Sigmoid colon (tissue), 7 donors: ENCODE measurements at regions of chr19 and their contacts with region 1.

Region 1: GRCh38 chr19:36772311-36773222 is at the start of gene ZNF850:
- DNase-seq: peak; percentile 97
- H3K4me3 ChIP-seq: peak within 1 kb of the TSS; percentile 53 to 76 (median 71)
- H3K27ac ChIP-seq: peak within 1 kb of the TSS; percentile 80 to 88 (median 84)
- H3K4me1 ChIP-seq: peaks cover 0 to 20% (median 10%) of the 10 kb centered on the region in 4 donors
- H3K27me3 ChIP-seq: peaks cover 0 to 9% (median 0%) of the 10 kb centered on the region in 3 donors
- CTCF ChIP-seq: no peak
- EP300 ChIP-seq: no peak
- POLR2A ChIP-seq: no peak
- total RNA-seq, gene ZNF850: 2.2 to 4.6 (median 3.3) TPM

Region 2: DNA sequence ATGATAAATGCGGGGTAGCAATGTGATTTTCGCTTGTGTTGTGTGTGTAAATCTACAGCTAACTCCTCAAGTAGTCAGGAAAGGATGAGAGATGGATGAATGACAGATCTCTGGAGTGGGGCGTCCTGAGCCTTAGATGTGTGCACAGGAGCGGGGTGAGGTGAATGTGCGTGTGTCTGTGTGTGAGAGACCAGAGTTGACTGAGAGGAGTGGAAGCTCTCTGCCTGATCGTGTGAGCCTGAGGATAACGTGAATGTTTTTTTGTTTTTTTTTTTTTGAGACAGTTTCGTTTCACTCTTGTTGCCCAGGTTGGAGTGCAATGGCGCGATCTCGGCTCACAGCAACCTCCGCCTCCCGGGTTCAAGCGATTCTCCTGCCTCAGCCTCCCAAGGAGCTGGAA is 106.7 kb before region 1 on chr19:
- intact Hi-C with region 1: loop called (anchors 2 kb)
- DNase-seq: no peak
- H3K4me3 ChIP-seq: peak overlapping the region; percentile 66 to 86 (median 76)
- H3K27ac ChIP-seq: no peak overlapping the region
- H3K4me1 ChIP-seq: peaks cover 0 to 21% (median 17%) of the 10 kb centered on the region in 4 donors
- H3K27me3 ChIP-seq: no peaks in the 10 kb centered on the region
- CTCF ChIP-seq: no peak
- EP300 ChIP-seq: no peak
- POLR2A ChIP-seq: no peak

Region 3: DNA sequence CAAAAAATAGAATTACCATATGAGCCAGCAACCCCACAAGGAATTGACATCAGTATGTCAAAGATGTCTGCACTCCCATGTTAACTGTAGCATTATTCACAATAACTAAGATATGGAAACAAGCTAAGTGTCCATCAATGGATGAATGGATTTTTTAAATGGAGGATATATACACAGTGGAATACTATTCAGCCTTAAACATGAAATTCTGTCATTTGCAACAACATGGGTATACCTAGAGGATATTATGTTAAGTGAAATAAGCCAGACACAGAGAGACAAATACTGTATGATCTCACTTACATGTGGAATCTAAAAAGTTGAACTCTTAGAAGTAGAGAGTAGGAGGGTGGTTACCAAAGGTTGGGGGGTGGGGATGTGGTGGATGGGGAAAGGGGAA is 93.1 kb before region 1 on chr19:
- intact Hi-C with region 1: no loop called
- DNase-seq: no peak
- H3K4me3 ChIP-seq: no peak overlapping the region
- H3K27ac ChIP-seq: no peak overlapping the region
- H3K4me1 ChIP-seq: no peaks in the 10 kb centered on the region
- H3K27me3 ChIP-seq: no peaks in the 10 kb centered on the region
- CTCF ChIP-seq: no peak
- EP300 ChIP-seq: no peak
- POLR2A ChIP-seq: no peak

Region 4: DNA sequence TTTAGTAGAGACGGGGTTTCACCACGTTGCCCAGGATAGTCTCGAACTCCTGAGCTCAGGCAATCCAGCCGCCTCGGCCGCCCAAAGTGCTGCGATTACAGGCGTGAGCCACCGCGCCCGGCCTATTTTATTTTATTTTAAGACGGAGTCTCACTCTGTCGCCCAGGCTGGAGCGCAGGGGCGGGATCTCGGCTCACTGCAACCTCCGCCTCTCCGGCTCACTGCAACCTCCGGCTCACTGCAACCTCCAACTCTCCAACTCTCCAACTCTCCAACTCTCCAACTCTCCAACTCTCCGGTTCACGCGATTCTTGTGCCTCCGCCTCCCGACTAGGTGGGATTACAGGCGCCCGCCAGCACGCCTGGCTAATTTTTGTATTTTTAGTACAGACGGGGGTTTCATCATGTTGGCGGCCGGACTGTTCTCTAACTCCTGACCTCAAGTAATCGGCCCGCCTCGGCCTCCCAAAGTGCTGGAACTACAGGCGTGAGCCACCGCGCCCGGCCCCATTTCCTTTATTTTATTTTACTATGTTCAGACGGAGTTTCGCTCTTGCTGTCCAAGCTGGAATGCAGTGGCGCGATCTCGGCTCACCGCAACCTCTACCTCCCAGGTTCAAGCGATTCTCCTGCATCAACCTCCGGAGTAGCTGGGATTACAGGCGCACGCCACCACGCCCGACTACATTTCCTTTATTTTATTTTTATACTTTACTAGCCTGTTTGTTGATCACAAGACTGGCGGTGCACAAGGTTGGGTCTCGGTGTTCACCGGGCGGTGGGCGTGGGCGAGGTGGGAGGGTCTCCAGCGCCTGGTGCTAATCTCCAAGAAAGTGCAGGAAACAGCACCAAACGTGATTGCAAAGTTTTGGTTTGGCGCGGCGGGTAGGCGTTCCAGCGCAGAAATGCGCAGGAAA is 23.8 kb after region 1 on chr19:
- intact Hi-C with region 1: loop called (anchors 2 kb)
- DNase-seq: no peak
- H3K4me3 ChIP-seq: peak overlapping the region; percentile 63 to 83 (median 74)
- H3K27ac ChIP-seq: peak overlapping the region; percentile 70 to 78 (median 78)
- H3K4me1 ChIP-seq: peaks cover 0 to 18% (median 7%) of the 10 kb centered on the region in 4 donors
- H3K27me3 ChIP-seq: no peaks in the 10 kb centered on the region
- CTCF ChIP-seq: no peak
- EP300 ChIP-seq: no peak
- POLR2A ChIP-seq: no peak

Region 5: DNA sequence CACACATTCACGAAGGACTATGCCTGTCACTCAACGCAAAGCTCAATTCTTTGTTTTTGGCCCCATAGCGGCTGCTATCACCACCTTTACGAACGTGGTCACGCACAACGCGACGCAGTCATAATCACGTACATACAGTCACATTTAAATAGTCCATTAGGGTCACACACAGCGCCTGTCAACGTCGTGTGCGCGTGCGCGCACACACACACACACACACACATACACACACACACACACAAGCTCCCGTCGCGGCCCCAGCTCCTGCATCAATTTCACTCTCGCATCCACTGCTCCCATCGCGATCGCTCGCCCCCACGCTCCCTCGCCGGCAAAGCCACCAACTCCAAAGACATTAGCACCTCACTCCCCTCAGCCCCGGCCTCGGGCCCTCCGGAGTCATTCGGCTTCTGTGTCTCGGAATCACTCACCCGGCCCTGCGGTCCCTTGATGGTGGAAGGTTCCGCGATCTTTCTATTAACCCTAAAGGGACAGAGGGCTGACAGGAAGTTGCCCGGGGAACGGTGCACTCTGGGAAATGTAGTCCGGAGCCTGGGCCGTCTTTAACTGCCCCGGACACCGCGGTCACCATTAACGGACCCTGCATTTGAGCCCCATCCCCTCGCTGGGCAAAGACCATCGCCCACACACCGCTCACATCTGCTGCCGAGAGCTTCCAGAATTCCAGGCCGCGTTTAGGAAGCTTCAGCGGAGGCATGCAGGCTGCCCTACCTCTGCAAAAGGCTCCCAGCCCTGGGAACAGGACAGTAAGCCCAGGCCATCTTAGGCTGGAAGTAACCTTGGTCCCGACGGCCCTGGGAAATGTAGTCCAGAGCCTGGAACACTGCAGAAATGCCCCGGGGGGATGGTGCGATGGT is 65.6 kb after region 1 on chr19 and contains the start of gene ZNF790:
- intact Hi-C with region 1: loop called (anchors 2 kb)
- DNase-seq: peak; percentile 94
- H3K4me3 ChIP-seq: peak within 1 kb of the TSS; percentile 58 to 82 (median 71)
- H3K27ac ChIP-seq: peak within 1 kb of the TSS; percentile 82 to 90 (median 88)
- H3K4me1 ChIP-seq: peaks cover 0 to 20% (median 14%) of the 10 kb centered on the region in 4 donors
- H3K27me3 ChIP-seq: no peaks in the 10 kb centered on the region
- CTCF ChIP-seq: no peak
- EP300 ChIP-seq: no peak
- POLR2A ChIP-seq: peak in 1 of 2 donors; percentile 17
- total RNA-seq, gene ZNF790: 8.6 to 13.3 (median 9.6) TPM

Region 6: DNA sequence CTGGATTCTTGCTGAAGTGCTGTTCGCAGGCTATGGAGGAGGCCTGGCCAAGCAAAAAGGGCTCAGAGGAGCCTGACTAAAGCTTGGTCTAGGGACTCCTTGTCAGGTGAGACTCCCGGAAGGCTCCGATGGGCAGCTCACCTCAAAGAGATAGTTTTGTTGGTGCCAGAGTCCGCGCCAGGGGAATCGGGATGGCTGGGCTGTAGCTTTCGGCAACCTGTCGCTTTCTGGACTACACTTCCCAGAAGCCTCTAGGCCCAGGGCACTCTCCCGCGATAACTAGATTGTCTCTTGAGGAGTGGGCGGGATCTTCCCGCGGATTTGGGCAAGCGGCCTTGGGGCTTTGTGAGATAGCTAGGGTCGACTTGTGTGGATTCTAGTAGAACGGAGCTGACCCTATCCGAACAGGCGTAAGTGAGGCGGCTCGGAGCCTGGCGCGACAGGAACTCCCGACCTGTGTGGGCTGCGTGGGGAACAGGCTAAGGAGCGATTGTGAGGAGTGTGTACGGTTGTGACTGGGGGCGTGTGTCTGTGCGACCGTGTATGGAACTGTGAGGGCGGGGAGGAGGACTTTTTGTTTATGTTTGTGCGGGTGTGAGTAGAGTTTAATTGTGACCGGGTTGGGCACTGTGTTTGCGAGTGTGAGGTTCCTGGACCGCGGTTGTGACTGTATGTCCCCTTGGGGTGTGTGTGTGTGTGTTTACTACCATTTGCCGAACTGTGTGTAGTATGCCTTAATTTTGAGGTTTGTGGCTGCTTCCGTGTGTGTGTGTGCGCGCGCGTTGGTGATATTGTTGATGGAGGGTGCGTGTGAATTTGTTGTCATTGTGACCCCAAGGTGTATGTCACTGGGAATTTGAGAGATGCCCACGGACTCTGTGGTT is 78.2 kb after region 1 on chr19 and contains the start of gene ZNF345:
- intact Hi-C with region 1: loop called (anchors 2 kb)
- DNase-seq: peak; percentile 95
- H3K4me3 ChIP-seq: peak within 1 kb of the TSS; percentile 58 to 77 (median 70)
- H3K27ac ChIP-seq: peak within 1 kb of the TSS; percentile 88 to 92 (median 90)
- H3K4me1 ChIP-seq: peaks cover 0 to 22% (median 17%) of the 10 kb centered on the region in 4 donors
- H3K27me3 ChIP-seq: no peaks in the 10 kb centered on the region
- CTCF ChIP-seq: no peak
- EP300 ChIP-seq: no peak
- POLR2A ChIP-seq: peak in 1 of 2 donors; percentile 37
- total RNA-seq, gene ZNF345: 4.6 to 13.0 (median 6.2) TPM

Region 7: DNA sequence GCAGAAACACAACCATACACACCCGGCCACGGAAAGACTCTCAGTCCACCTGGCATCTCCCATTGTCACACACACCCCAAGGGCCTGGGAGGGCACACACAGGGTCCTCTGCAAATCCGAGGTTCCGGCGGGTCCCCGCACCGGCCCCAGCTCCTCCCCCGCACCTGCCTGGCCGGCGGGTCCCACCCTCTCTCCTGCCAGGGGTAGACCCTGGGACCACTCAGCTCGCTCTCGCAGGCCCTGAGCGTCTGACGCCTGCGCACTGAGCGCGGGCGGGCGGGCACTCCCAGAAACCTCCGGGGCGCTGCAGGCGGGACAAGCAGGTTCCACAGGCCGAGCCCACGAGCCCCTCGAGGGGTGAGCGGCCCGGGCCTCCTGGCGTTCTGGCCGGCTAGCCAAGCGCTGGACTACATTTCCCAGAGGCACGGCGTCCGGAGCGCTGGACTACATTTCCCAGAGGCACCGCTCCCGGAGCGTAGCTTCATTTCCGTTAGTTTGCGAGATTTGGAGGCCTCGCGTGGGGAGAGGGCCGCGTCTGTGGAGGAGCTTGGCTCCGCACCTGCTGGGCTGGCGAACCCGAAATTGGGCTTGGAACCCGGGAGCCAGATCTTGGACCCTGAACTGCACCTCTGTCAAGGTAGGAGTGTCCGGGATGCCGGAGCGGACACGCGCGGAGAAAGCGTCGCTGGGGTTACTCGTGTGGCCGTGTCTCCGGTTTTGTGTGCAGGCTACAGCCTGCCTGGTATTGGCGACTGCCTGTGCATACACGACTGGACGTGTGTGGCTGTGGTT is 305.6 kb after region 1 on chr19 and contains the start of gene ZNF420:
- intact Hi-C with region 1: loop called (anchors 2 kb)
- DNase-seq: peak; percentile 97
- H3K4me3 ChIP-seq: peak within 1 kb of the TSS; percentile 58 to 82 (median 74)
- H3K27ac ChIP-seq: peak within 1 kb of the TSS; percentile 86 to 91 (median 88)
- H3K4me1 ChIP-seq: peaks cover 0 to 20% (median 14%) of the 10 kb centered on the region in 4 donors
- H3K27me3 ChIP-seq: no peaks in the 10 kb centered on the region
- CTCF ChIP-seq: no peak
- EP300 ChIP-seq: peak in 1 of 4 donors; percentile 4
- POLR2A ChIP-seq: peak in 1 of 2 donors; percentile 53
- total RNA-seq, gene ZNF420: 8.4 to 18.6 (median 14.1) TPM